Natural killer cell (primary cell): ENCODE measurements at regions of chr2 and their contacts with region 1.

Region 1: DNA sequence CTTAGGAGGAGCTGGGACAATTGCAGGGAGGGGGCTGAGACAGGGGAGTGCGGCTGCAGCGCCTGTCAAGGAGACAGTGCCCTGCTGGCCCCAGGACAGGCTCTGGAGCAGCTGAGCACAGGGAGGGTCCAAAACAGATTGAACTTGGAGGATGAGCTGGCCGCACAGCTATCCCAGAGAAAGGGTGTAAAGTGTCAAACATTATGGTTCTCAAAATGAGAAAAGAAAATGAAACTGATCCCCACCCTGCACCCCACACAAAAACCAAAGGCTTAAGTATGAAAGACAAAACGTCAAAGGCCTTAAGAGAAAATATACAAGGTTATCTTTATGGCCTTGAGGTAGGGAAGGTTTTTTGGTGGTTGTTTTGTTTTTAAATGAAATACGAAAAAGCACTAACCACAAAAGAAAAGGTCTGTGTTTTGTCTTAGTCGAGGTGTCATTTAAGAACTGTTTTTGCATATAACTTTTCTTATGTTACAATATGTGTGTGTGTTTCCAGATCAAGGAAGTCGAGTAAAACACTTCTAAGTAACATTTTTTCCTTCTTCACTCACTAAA is 111.8 kb downstream of the HDAC4 start:
- DNase-seq: peak in 1 of 2 donors; percentile 79
- ATAC-seq: peak; percentile 74 to 81 (median 76)
- H3K4me3 ChIP-seq: no peak overlapping the region
- H3K4me3 Mint-ChIP-seq: peak overlapping the region; percentile 71
- H3K27ac ChIP-seq: peak overlapping the region; percentile 89
- H3K27ac Mint-ChIP-seq: peak overlapping the region; percentile 93 to 96
- H3K4me1 ChIP-seq: peaks cover 30% of the 10 kb centered on the region
- H3K4me1 Mint-ChIP-seq: peaks cover 44% of the 10 kb centered on the region in 2 donors
- H3K27me3 ChIP-seq: no peaks in the 10 kb centered on the region
- H3K27me3 Mint-ChIP-seq: no peaks in the 10 kb centered on the region
- CTCF ChIP-seq: no peak

Region 2: GRCh38 chr2:237966565-237967462 is 1322.2 kb before region 1 on chr2 and contains the start of gene UBE2F:
- intact Hi-C with region 1: no loop called
- DNase-seq: peak; percentile 97 to 98
- ATAC-seq: peak; percentile 93 to 98 (median 93)
- H3K4me3 ChIP-seq: peak within 1 kb of the TSS; percentile 81
- H3K4me3 Mint-ChIP-seq: peak within 1 kb of the TSS; percentile 92
- H3K27ac ChIP-seq: peak within 1 kb of the TSS; percentile 47
- H3K27ac Mint-ChIP-seq: peak within 1 kb of the TSS; percentile 86 to 90
- H3K4me1 ChIP-seq: peaks cover 43% of the 10 kb centered on the region
- H3K4me1 Mint-ChIP-seq: peaks cover 49 to 51% of the 10 kb centered on the region in 2 donors
- H3K27me3 ChIP-seq: no peaks in the 10 kb centered on the region
- H3K27me3 Mint-ChIP-seq: no peaks in the 10 kb centered on the region
- CTCF ChIP-seq: no peak
- total RNA-seq, gene UBE2F: 82.4 to 135 (median 96.1) TPM

Region 3: GRCh38 chr2:238389926-238390597 is 899.0 kb before region 1 on chr2:
- intact Hi-C with region 1: no loop called
- DNase-seq: no peak
- ATAC-seq: no peak
- H3K4me3 ChIP-seq: no peak overlapping the region
- H3K4me3 Mint-ChIP-seq: no peak overlapping the region
- H3K27ac ChIP-seq: no peak overlapping the region
- H3K27ac Mint-ChIP-seq: no peak overlapping the region
- H3K4me1 ChIP-seq: peaks cover 11% of the 10 kb centered on the region
- H3K4me1 Mint-ChIP-seq: peaks cover 10% of the 10 kb centered on the region in 2 donors
- H3K27me3 ChIP-seq: no peaks in the 10 kb centered on the region
- H3K27me3 Mint-ChIP-seq: no peaks in the 10 kb centered on the region
- CTCF ChIP-seq: no peak

Region 4: DNA sequence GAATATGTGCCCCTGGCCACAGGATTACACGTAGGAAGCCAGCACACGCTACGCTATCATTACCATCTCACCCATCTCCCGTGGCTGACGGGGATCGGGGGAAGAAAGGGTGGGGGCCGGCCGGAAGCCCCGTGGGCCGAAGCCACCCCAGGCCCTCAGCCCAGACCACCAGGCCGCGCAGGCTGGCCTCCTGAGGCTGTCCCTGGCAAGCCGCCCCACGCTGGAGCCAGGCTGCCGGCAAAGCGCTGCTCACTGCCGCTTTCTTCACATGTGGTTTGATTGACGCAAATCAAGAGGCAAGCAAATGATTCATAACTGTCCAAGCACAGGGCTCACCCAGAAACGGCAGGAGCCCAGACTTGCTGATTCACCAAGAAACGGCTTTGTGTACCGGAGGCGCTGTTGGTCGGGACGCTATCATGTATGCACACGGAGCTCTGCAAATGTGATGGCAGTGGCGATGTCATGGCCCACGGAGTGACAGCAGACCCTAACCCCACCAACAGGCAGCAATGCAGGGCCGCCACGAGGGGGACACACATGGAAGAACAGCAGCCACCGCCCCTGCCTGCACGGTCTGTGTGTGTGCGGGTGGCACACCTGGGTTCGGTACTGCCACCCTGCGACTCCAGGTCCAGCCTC is 13.9 kb before region 1 on chr2:
- intact Hi-C with region 1: loop called (anchors 2 kb)
- DNase-seq: peak; percentile 70 to 93
- ATAC-seq: peak; percentile 77 to 93 (median 87)
- H3K4me3 ChIP-seq: peak overlapping the region; percentile 8
- H3K4me3 Mint-ChIP-seq: peak overlapping the region; percentile 86
- H3K27ac ChIP-seq: peak overlapping the region; percentile 80
- H3K27ac Mint-ChIP-seq: peak overlapping the region in 1 of 2 donors; percentile 93
- H3K4me1 ChIP-seq: peaks cover 67% of the 10 kb centered on the region
- H3K4me1 Mint-ChIP-seq: peaks cover 70 to 77% of the 10 kb centered on the region in 2 donors
- H3K27me3 ChIP-seq: no peaks in the 10 kb centered on the region
- H3K27me3 Mint-ChIP-seq: no peaks in the 10 kb centered on the region
- CTCF ChIP-seq: no peak

Region 5: GRCh38 chr2:239308661-239309397 is 19.8 kb after region 1 on chr2:
- intact Hi-C with region 1: no loop called
- DNase-seq: no peak
- ATAC-seq: no peak
- H3K4me3 ChIP-seq: no peak overlapping the region
- H3K4me3 Mint-ChIP-seq: no peak overlapping the region
- H3K27ac ChIP-seq: no peak overlapping the region
- H3K27ac Mint-ChIP-seq: no peak overlapping the region
- H3K4me1 ChIP-seq: peaks cover 34% of the 10 kb centered on the region
- H3K4me1 Mint-ChIP-seq: peaks cover 24 to 33% of the 10 kb centered on the region in 2 donors
- H3K27me3 ChIP-seq: no peaks in the 10 kb centered on the region
- H3K27me3 Mint-ChIP-seq: no peaks in the 10 kb centered on the region
- CTCF ChIP-seq: no peak

Region 6: DNA sequence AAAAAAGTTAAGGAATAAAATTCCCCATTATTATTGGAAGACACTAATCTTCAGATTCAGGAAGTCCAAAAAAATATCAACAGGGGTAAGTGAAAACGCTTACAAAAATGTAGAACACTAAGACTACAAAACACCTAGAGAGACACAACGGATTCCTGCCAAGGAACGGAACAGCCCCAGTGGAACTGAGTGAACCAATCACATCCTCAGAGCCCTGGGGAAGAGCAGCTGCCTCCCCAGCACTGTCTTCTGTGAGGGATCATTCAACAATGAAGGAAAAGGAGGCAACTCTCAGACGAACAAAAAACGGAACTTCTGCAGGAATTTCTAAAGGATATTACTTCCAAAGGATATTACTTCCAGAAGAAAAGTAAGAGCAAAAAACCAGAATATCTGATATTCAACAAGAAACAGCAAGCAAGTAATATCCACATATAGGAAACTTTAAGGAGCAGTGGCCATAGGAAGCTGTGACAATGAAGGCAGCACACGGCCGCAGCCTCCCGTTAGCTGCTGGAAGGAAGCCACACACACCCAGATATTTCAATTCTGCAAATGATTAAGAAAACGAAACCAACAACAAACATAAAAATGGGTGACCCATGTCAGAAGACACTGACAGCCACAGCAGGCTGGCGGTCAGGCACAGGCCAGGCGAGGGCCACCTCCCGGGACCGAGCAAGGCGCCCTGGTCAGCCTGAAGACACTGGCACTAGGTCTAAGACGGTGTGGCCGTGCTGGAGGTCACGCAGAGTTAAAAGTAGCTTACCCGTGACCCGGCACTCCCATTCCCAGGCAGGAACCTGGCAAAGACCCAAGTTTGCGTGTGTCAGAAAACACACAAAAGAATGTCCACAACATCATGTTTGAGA is 30.0 kb after region 1 on chr2:
- intact Hi-C with region 1: loop called (anchors 5 kb)
- DNase-seq: peak; percentile 29 to 58
- ATAC-seq: peak; percentile 34 to 42 (median 40)
- H3K4me3 ChIP-seq: peak overlapping the region; percentile 14
- H3K4me3 Mint-ChIP-seq: peak overlapping the region; percentile 82
- H3K27ac ChIP-seq: peak overlapping the region; percentile 87
- H3K27ac Mint-ChIP-seq: peak overlapping the region; percentile 93 to 94
- H3K4me1 ChIP-seq: peaks cover 56% of the 10 kb centered on the region
- H3K4me1 Mint-ChIP-seq: peaks cover 59 to 61% of the 10 kb centered on the region in 2 donors
- H3K27me3 ChIP-seq: no peaks in the 10 kb centered on the region
- H3K27me3 Mint-ChIP-seq: no peaks in the 10 kb centered on the region
- CTCF ChIP-seq: no peak